ENCODE measurements at regions of chr3 and their contacts with region 1.

Region 1: GRCh38 chr3:85090495-85090894 is 131.7 kb downstream of the CADM2 start:
- DNase-seq: no peak
- H3K4me3 ChIP-seq: no peak overlapping the region
- H3K27ac ChIP-seq: no peak overlapping the region
- H3K4me1 ChIP-seq: no peaks in the 10 kb centered on the region
- H3K27me3 ChIP-seq: no peaks in the 10 kb centered on the region
- CTCF ChIP-seq: no peak

Region 2: GRCh38 chr3:84772841-84773240 is 317.7 kb before region 1 on chr3:
- CTCF ChIA-PET with region 1: no interaction called
- POLR2A ChIA-PET with region 1: no interaction called
- intact Hi-C with region 1: no loop called
- DNase-seq: no peak
- H3K4me3 ChIP-seq: no peak overlapping the region
- H3K27ac ChIP-seq: no peak overlapping the region
- H3K4me1 ChIP-seq: no peaks in the 10 kb centered on the region
- H3K27me3 ChIP-seq: no peaks in the 10 kb centered on the region
- CTCF ChIP-seq: no peak

Region 3: GRCh38 chr3:85433319-85433718 is 342.8 kb after region 1 on chr3:
- CTCF ChIA-PET with region 1: no interaction called
- POLR2A ChIA-PET with region 1: interaction called, 10 read pairs
- intact Hi-C with region 1: no loop called
- DNase-seq: no peak
- H3K4me3 ChIP-seq: no peak overlapping the region
- H3K27ac ChIP-seq: no peak overlapping the region
- H3K4me1 ChIP-seq: no peaks in the 10 kb centered on the region
- H3K27me3 ChIP-seq: no peaks in the 10 kb centered on the region
- CTCF ChIP-seq: no peak

Measured in A673 (cell line).